ENCODE measurements at regions of chr17 and their contacts with region 1.

Region 1: DNA sequence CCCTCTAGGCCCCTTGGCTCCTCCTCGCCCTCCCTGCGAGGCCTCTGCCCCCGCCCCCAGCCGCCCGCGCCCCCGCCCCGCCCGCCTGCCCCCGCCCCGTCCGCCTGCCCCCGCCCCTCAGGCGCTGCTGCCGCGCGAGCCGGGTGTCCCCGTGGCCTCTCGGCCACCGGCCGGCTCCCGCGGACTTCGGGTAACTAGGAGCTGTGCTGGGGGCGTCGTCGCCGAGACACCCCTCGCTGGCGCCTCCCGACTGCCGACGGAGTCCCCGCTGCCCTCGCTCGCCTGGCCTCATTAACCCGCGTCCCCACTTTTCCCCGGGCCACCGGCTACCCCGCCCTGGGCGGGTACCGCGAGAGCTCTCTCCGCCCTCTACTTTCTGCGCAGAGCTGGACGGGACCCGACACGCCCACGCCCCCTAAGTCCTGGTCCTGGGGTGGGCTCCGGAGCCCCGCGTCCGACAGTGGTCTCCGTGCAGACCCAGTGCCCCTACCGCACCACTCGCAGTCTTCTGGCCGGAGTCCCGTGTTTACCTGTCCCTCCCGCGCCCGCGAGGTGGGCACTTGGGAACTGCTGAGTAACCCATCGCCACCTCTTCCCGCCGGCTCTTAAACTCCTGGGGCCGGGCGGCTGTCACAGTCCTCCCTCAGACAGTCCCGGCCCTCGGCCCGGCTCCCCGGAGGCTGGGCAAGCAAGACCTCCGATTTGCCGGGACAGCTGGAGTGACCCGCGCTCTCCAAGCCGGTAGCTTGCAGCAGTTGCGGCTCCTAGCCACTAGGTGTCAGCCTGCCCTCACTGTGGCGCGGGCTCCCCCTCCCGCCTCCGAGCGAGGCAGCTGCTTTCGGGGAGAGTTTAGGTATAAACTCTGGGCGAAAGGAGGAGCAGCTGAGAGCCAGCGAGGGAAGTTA is at the start of gene TLCD1:
- DNase-seq: peak; percentile 82 to 93 (median 88)
- ATAC-seq: peak; percentile 37 to 44
- H3K4me3 Mint-ChIP-seq: peak within 1 kb of the TSS; percentile 95 to 100 (median 98)
- H3K27ac Mint-ChIP-seq: peak within 1 kb of the TSS; percentile 82 to 100 (median 99)
- H3K4me1 Mint-ChIP-seq: peaks cover 16 to 66% (median 54%) of the 10 kb centered on the region in 4 donors
- H3K27me3 Mint-ChIP-seq: no peaks in the 10 kb centered on the region
- polyA plus RNA-seq, gene TLCD1: 0.22 TPM in 1 of 3 donors, not detected in the others

Region 2: DNA sequence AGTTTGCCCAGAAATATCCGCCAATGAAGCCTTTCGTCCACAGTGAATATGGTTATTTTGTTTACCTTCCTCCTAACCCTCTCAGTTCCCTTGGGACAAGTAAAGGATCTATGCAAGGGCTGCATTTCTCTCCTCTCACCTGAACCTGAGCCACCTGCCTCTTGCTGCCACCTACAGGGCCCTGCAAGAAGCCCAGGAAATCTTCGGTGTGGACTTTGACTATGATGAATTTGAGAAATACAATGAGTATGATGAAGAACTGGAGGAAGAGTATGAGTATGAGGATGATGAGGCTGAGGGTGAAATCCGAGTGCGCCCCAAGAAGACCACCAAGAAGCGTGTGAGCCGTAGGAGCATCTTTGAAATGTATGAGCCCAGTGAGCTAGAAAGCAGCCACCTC is 50.5 kb before region 1 on chr17:
- POLR2A ChIA-PET with region 1: no interaction called
- DNase-seq: peak in 1 of 10 donors; percentile 7
- ATAC-seq: no peak
- H3K4me3 Mint-ChIP-seq: no peak overlapping the region
- H3K27ac Mint-ChIP-seq: no peak overlapping the region
- H3K4me1 Mint-ChIP-seq: peaks cover 0 to 6% (median 3%) of the 10 kb centered on the region in 4 donors
- H3K27me3 Mint-ChIP-seq: no peaks in the 10 kb centered on the region

Region 3: GRCh38 chr17:28710861-28711722 is 15.4 kb before region 1 on chr17:
- POLR2A ChIA-PET with region 1: interaction called, 81 read pairs
- DNase-seq: peak; percentile 82 to 92 (median 88)
- ATAC-seq: peak; percentile 88 to 89
- H3K4me3 Mint-ChIP-seq: peak overlapping the region; percentile 84 to 95 (median 92)
- H3K27ac Mint-ChIP-seq: peak overlapping the region; percentile 85 to 97 (median 95)
- H3K4me1 Mint-ChIP-seq: peaks cover 3 to 20% (median 15%) of the 10 kb centered on the region in 4 donors
- H3K27me3 Mint-ChIP-seq: peaks cover 0 to 18% (median 10%) of the 10 kb centered on the region in 5 donors

Region 4: DNA sequence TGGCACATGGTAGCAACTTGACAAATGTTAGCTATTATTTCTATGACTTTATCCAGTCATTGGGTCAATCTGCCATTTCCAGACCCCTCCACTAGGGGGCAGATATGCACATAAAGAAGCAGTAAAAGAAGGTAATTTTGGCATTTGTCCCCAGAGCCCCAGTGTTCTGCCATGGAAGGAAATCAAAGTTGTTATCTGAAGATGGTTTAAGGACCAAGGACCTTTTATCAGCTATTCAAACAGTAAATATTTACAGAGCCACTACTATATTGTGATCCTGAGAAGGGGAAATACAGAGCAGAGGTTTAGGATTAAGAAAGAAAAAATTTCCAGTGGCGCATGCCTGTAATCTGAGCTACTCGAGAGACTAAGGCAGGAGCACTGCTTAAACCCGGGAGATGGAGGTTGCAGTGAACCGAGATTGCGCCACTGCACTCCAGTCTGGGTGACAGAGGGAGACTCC is 37.4 kb after region 1 on chr17:
- POLR2A ChIA-PET with region 1: interaction called, 17 read pairs
- DNase-seq: peak; percentile 50 to 91 (median 74)
- ATAC-seq: peak; percentile 71 to 80
- H3K4me3 Mint-ChIP-seq: no peak overlapping the region
- H3K27ac Mint-ChIP-seq: peak overlapping the region in 5 of 10 donors; percentile 3 to 90 (median 61)
- H3K4me1 Mint-ChIP-seq: peaks cover 2 to 6% (median 4%) of the 10 kb centered on the region in 4 donors
- H3K27me3 Mint-ChIP-seq: no peaks in the 10 kb centered on the region

Region 5: GRCh38 chr17:28896884-28897768 is 170.6 kb after region 1 on chr17 and contains the start of gene FLOT2:
- POLR2A ChIA-PET with region 1: interaction called, 28 read pairs
- DNase-seq: peak; percentile 56 to 84 (median 67)
- ATAC-seq: peak; percentile 76 to 83
- H3K4me3 Mint-ChIP-seq: peak within 1 kb of the TSS; percentile 91 to 99 (median 98)
- H3K27ac Mint-ChIP-seq: peak within 1 kb of the TSS; percentile 95 to 99 (median 97)
- H3K4me1 Mint-ChIP-seq: peaks cover 47 to 75% (median 72%) of the 10 kb centered on the region in 4 donors
- H3K27me3 Mint-ChIP-seq: no peaks in the 10 kb centered on the region
- polyA plus RNA-seq, gene FLOT2: 230 to 253 (median 237) TPM

Region 6: GRCh38 chr17:28916302-28916934 is 189.9 kb after region 1 on chr17:
- POLR2A ChIA-PET with region 1: interaction called, 14 read pairs
- DNase-seq: peak in 8 of 10 donors; percentile 20 to 67 (median 37)
- ATAC-seq: peak; percentile 87
- H3K4me3 Mint-ChIP-seq: no peak overlapping the region
- H3K27ac Mint-ChIP-seq: peak overlapping the region; percentile 38 to 92 (median 73)
- H3K4me1 Mint-ChIP-seq: peaks cover 0 to 9% (median 7%) of the 10 kb centered on the region in 4 donors
- H3K27me3 Mint-ChIP-seq: no peaks in the 10 kb centered on the region

Measured in naive thymus-derived CD8-positive, alpha-beta T cell (primary cell).